H1 (cell line): ENCODE measurements at regions of chr3 and their contacts with region 1.

Region 1: GRCh38 chr3:90091204-90091924 is 983.9 kb downstream of the EPHA3 start:
- DNase-seq: no peak
- H3K4me3 ChIP-seq: no peak overlapping the region
- H3K27ac ChIP-seq: no peak overlapping the region
- H3K4me1 ChIP-seq: peaks cover 0 to 5% (median 1%) of the 10 kb centered on the region in 4 experiments; a peak in 1 of 7 replicates
- H3K27me3 ChIP-seq: no peaks in the 10 kb centered on the region
- CTCF ChIP-seq: peak; percentile 46 to 66 (median 53)
- EP300 ChIP-seq: no peak
- POLR2A ChIP-seq: no peak
- RAD21 ChIP-seq: peak; percentile 92 to 94

Region 2: DNA sequence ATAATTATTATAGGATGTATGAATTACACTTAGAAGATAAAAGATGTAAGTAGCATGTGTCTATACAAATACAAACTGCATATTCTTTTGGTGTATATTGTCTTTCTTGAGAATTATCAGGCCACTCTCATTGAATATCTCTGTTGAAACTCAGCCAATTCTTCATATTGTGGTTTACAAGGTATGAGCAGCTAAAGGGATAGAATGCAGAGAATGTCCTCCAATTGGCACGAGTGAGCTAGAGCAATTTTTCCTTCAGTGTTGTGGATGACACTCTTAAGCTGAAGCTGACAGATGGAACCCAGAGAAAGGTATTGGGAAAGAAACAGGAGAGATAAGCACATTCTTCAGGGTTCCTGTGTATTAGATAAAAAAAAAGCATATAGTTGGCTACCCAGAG is 530.8 kb before region 1 on chr3:
- CTCF ChIA-PET with region 1: interaction called, 18 read pairs
- POLR2A ChIA-PET with region 1: no interaction called
- DNase-seq: no peak
- H3K4me3 ChIP-seq: no peak overlapping the region
- H3K27ac ChIP-seq: no peak overlapping the region
- H3K4me1 ChIP-seq: no peaks in the 10 kb centered on the region
- H3K27me3 ChIP-seq: no peaks in the 10 kb centered on the region
- CTCF ChIP-seq: no peak
- EP300 ChIP-seq: no peak
- POLR2A ChIP-seq: no peak
- RAD21 ChIP-seq: no peak

Region 3: GRCh38 chr3:89813500-89813899 is 277.9 kb before region 1 on chr3:
- CTCF ChIA-PET with region 1: interaction called, 10 read pairs
- POLR2A ChIA-PET with region 1: no interaction called
- DNase-seq: no peak
- H3K4me3 ChIP-seq: no peak overlapping the region
- H3K27ac ChIP-seq: no peak overlapping the region
- H3K4me1 ChIP-seq: no peaks in the 10 kb centered on the region
- H3K27me3 ChIP-seq: no peaks in the 10 kb centered on the region
- CTCF ChIP-seq: no peak
- EP300 ChIP-seq: no peak
- POLR2A ChIP-seq: no peak
- RAD21 ChIP-seq: no peak

Region 4: GRCh38 chr3:89947337-89947954 is 143.9 kb before region 1 on chr3:
- CTCF ChIA-PET with region 1: interaction called, 19 read pairs
- POLR2A ChIA-PET with region 1: no interaction called
- DNase-seq: no peak
- H3K4me3 ChIP-seq: no peak overlapping the region
- H3K27ac ChIP-seq: no peak overlapping the region
- H3K4me1 ChIP-seq: no peaks in the 10 kb centered on the region
- H3K27me3 ChIP-seq: no peaks in the 10 kb centered on the region
- CTCF ChIP-seq: peak in 2 of 3 experiments; percentile 3 to 27; a peak in 3 of 4 replicates
- EP300 ChIP-seq: no peak
- POLR2A ChIP-seq: no peak
- RAD21 ChIP-seq: peak; percentile 41 to 50; a peak in 3 of 4 replicates

Region 5: GRCh38 chr3:90080988-90081387 is 10.4 kb before region 1 on chr3:
- CTCF ChIA-PET with region 1: interaction called, 10 read pairs
- POLR2A ChIA-PET with region 1: no interaction called
- DNase-seq: peak in 1 of 2 experiments; percentile 9
- H3K4me3 ChIP-seq: no peak overlapping the region
- H3K27ac ChIP-seq: no peak overlapping the region
- H3K4me1 ChIP-seq: peaks cover 0 to 8% (median 6%) of the 10 kb centered on the region in 4 experiments; a peak in 4 of 7 replicates
- H3K27me3 ChIP-seq: no peaks in the 10 kb centered on the region
- CTCF ChIP-seq: no peak
- EP300 ChIP-seq: 0 out of 3 replicates have a peak, but pooled peaks of 1 of the 2 experiments have one; percentile 11
- POLR2A ChIP-seq: no peak
- RAD21 ChIP-seq: no peak